Adrenal gland (tissue), 19 donors: ENCODE measurements at regions of chr6 and their contacts with region 1.

Region 1: DNA sequence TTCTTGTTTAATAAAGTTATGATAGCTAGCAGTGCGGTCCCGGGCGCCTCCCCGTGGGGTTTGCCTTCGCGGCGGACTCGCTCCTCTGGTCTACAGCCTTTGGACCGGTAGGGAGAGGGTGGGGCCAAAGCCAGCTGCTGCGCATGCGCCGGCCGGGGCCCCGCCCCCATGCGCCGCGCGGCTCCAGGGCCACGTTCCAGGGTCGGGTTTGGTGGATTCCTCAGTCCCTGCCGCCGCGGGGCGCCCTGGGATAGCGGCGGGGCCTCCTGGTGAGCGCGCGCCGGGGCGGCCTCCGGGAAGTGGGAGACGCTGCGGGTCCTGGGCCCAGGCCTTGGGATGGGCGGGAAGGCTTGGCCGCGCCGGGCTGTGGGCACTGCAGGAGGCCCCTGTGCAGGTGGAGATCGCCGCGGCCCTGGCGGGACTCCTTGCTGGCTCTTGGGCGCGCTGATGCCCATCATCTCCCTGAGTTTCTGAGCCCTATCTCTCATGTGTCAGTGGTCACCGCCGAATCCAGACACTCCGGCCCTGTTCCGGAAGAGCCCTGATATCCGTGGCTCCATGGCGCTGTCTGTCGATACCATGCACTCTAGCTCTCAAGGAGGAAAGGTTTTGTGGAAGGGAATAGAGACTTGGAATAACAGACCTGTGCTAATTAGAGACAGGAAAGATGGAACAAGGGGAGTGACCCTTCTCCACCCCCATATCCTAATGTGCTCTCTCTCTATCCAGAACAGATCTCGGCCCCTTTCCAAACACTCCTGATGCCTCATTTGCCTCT is at the start of gene VARS2:
- DNase-seq: peak; percentile 88 to 97 (median 94)
- H3K4me3 ChIP-seq: peak within 1 kb of the TSS in 3 of 4 donors; percentile 21 to 77 (median 35)
- H3K27ac ChIP-seq: peak within 1 kb of the TSS; percentile 50 to 94 (median 79)
- H3K4me1 ChIP-seq: peaks cover 10 to 27% of the 10 kb centered on the region in 2 donors
- H3K27me3 ChIP-seq: no peaks in the 10 kb centered on the region
- CTCF ChIP-seq: peak in 5 of 6 experiments; percentile 28 to 42 (median 34)
- POLR2A ChIP-seq: peak; percentile 89 to 91
- total RNA-seq, gene VARS2: 17.1 to 51.6 (median 31.1) TPM

Region 2: DNA sequence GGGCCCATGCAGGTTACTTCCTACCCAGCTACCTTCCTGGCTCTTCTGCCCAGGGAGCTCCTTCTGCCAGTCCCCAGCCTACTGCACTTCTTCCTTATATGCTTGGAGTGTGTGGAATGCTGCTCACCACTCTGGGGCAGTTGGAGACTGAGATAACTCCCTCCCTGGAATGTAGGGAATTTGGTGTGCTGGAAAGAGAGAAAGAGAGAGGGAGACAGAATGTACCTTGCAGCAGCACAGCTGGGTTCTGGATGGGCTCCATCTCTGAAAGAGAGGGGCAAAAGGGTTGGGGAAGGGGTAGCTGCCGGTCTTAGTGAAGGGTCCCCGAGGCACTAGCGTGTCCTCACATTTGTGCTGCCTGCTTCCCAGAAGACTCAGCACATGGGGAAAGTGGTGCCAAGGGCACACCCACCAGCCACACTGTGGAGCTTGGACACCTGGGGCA is 70.2 kb before region 1 on chr6:
- intact Hi-C with region 1: no loop called
- DNase-seq: no peak
- H3K4me3 ChIP-seq: no peak overlapping the region
- H3K27ac ChIP-seq: no peak overlapping the region
- H3K4me1 ChIP-seq: peaks cover 0 to 19% of the 10 kb centered on the region in 2 donors
- H3K27me3 ChIP-seq: no peaks in the 10 kb centered on the region
- CTCF ChIP-seq: no peak
- POLR2A ChIP-seq: no peak

Region 3: GRCh38 chr6:30877419-30878371 is 36.6 kb before region 1 on chr6:
- intact Hi-C with region 1: loop called in 1 of 2 experiments (anchors 5 kb)
- DNase-seq: peak; percentile 91 to 98 (median 96)
- H3K4me3 ChIP-seq: peak overlapping the region in 2 of 4 donors; percentile 3 to 30
- H3K27ac ChIP-seq: peak overlapping the region; percentile 55 to 90 (median 83)
- H3K4me1 ChIP-seq: peaks cover 9 to 36% of the 10 kb centered on the region in 2 donors
- H3K27me3 ChIP-seq: no peaks in the 10 kb centered on the region
- CTCF ChIP-seq: peak; percentile 75 to 99 (median 96)
- POLR2A ChIP-seq: peak in 1 of 2 donors; percentile 68

Region 4: DNA sequence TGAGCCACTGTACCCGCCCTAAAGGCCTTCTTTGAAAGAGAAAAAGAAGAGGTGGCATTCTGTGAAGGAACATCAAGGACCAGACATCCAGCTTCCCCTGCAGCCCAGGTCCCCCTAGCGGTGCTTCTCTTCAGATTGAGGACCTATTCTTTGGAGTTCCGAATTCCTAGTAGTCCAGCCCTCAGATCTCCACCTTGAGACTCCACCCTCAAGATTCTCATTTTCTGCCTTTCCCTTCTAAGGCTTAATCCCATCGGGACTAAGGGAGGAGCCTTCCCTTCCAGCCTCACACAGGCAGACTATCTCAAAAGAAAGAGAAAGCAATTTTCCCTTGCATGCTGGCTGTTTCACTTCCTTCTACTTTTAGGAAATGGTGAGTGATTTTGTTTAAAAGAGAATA is 128.5 kb after region 1 on chr6:
- intact Hi-C with region 1: loop called in 1 of 2 experiments (anchors 5 kb)
- DNase-seq: peak; percentile 53 to 71 (median 61)
- H3K4me3 ChIP-seq: no peak overlapping the region
- H3K27ac ChIP-seq: no peak overlapping the region
- H3K4me1 ChIP-seq: no peaks in the 10 kb centered on the region
- H3K27me3 ChIP-seq: peaks cover 8% of the 10 kb centered on the region
- CTCF ChIP-seq: peak; percentile 26 to 61 (median 44)
- POLR2A ChIP-seq: no peak

Region 5: DNA sequence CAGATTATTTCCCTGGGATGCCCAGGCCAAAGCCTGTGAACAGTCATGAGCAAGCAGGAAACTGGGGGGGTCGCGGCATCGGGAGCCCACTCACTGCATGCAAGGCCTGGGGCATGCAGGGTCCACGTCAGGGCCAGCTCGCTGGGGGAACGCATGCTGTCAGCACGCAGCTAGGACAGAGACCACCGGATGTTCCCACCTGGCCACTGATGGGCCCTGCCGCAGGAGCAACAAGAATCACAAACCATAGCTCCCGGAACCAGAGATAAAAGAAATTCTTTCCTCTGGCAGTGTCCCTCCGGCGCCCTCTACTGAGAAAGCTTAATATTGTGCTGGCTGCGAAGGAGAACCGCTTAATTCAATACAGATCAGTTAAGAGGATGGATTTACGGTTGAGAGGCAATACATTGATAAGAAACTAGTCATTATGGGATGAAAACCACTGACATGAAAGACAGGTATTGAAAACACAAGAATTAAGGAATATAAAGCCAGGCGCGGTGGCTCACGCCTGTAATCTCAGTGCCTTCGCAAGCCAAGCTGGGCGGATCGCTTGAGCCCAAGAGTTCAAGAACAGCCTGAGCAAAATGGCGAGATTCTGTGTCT is 165.5 kb after region 1 on chr6:
- intact Hi-C with region 1: loop called in 1 of 2 experiments (anchors 5 kb)
- DNase-seq: peak; percentile 49 to 89 (median 72)
- H3K4me3 ChIP-seq: peak overlapping the region in 1 of 4 donors; percentile 28
- H3K27ac ChIP-seq: no peak overlapping the region
- H3K4me1 ChIP-seq: peaks cover 0 to 3% of the 10 kb centered on the region in 2 donors
- H3K27me3 ChIP-seq: no peaks in the 10 kb centered on the region
- CTCF ChIP-seq: peak; percentile 68 to 81 (median 78)
- POLR2A ChIP-seq: no peak

Region 6: DNA sequence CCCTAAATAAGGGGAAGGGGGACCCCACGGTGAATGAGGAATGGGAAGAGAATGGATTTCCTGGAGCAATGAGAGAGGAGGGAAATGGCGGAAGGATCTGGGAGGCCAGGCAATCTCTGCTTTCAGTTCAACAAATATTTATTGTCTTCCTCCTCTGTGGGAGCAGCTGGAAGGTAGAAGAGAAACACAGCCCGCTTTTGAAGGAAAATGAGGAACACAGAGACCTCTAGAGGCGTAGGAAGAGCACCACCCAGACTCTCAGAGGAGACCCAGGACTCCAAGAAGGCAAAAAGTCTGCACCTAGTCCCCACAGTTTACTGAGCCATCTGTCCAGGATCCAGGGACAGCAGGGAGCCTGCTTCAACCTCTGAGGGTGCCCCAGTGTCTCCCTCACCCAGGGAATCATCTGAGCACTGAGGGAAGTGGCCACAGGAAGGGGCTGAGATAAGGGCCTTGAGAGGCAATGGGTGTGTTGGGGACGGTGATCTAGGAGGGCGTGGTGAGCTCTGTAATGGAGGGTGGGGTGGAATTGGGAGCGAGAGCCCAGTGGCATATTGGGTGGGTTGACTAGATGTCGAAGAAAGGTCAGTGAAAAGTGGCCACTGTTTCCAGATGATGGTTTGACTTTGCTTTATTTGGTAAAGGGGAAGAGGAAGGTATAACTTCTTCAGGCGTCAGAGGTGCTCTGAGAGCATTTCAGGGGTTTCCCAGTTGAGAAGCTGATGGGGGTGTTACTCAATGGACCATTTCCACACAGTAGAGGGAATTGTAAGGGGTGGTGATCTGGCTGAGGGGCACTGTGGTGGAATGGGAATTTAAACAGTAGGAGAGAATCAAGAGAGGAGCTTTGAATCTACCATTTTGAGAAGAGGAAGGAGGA is 200.9 kb after region 1 on chr6:
- intact Hi-C with region 1: no loop called
- DNase-seq: peak in 1 of 7 donors; percentile 16
- H3K4me3 ChIP-seq: peak overlapping the region in 1 of 4 donors; percentile 31
- H3K27ac ChIP-seq: peak overlapping the region in 1 of 5 donors; percentile 68
- H3K4me1 ChIP-seq: no peaks in the 10 kb centered on the region
- H3K27me3 ChIP-seq: peaks cover 4% of the 10 kb centered on the region
- CTCF ChIP-seq: peak in 1 of 6 experiments; percentile 15
- POLR2A ChIP-seq: no peak

Region 7: DNA sequence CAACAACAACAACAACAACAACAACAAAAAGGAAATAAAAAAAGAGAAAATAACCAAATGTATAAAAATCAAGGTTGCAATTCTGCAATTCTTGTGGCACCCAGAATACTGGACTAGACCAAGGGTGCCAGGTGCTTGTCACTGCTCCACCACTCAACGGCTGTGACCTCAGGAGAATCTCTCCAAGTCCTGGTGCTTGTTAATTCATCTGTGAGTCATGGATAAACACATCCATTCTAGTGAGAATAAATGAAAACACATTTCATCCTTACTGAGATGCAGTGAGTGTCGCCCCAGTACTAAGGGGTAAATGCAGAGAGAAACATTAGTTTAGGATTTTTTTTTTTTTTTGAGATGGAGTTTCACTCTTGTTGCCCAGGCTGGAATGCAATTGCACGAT is 325.6 kb after region 1 on chr6:
- intact Hi-C with region 1: no loop called
- DNase-seq: no peak
- H3K4me3 ChIP-seq: no peak overlapping the region
- H3K27ac ChIP-seq: no peak overlapping the region
- H3K4me1 ChIP-seq: no peaks in the 10 kb centered on the region
- H3K27me3 ChIP-seq: no peaks in the 10 kb centered on the region
- CTCF ChIP-seq: no peak
- POLR2A ChIP-seq: no peak